Cardiac septum (tissue), 1 donor: ENCODE measurements at regions of chr6 and their contacts with region 1.

Region 1: DNA sequence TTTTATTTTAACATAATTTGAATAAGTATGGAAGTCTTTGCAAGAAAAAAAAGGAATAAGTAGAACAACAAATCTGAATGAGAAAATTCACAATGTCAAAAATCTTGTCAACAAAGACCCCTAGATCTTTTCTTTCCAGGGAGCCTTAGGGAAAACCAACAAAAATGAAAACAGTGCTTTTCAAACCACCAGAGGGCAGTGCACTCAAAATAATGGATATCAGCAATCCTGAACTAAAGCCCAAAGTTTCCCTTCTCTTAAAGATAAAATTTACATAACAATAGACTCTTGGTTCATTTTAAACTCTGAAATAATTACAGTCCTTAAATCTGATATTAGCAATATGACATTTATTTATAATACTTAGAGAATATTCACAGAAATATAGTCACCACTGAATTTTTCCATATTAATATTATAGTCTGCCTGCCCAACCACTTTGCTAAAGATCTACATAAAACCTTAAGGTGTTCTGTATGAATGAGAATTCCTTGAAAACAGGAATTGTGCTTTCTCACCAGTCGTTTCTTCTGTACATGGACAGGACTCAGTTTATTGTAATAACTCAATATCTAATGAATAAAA is 105.3 kb upstream of the BMP5 start:
- DNase-seq: no peak

Region 2: GRCh38 chr6:55802259-55802658 is 178.5 kb before region 1 on chr6:
- intact Hi-C with region 1: no loop called
- DNase-seq: no peak

Region 3: DNA sequence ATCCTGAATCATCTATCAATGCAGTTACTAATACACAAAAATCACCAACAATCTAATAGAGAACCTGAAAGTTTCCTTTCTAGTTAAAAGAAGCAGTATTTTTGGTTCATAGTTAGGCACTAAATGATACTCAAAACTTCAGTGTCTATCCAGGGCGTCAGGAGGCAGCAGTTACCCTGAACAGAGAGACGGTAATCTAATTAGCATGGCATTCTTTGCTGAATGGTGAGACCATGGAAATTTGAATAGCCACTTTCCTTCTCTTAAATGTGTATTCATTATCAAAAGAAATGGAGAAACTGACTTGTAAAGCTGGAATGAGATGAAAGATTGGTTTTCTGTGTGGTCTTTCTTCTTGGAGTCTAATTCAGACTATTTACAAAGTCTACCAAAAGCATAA is 41.2 kb after region 1 on chr6:
- intact Hi-C with region 1: no loop called
- DNase-seq: no peak

Region 4: GRCh38 chr6:56062836-56063235 is 82.1 kb after region 1 on chr6:
- intact Hi-C with region 1: no loop called
- DNase-seq: no peak

Region 5: GRCh38 chr6:56292505-56293181 is 311.9 kb after region 1 on chr6:
- intact Hi-C with region 1: loop called (anchors 1 kb)
- DNase-seq: no peak